ENCODE measurements at regions of chr1 and their contacts with region 1.

Region 1: GRCh38 chr1:37807555-37808368 is at the starts of genes C1orf122 and YRDC:
- DNase-seq: peak; percentile 92
- H3K4me3 Mint-ChIP-seq: peak within 1 kb of the TSS; percentile 89
- H3K27ac Mint-ChIP-seq: peak within 1 kb of the TSS; percentile 96
- H3K4me1 Mint-ChIP-seq: peaks cover 10% of the 10 kb centered on the region
- H3K27me3 Mint-ChIP-seq: no peaks in the 10 kb centered on the region
- CTCF ChIP-seq: no peak
- total RNA-seq, gene C1orf122: 72.4 and 81.5 TPM in 2 replicates
- total RNA-seq, gene YRDC: 40.4 and 41.5 TPM in 2 replicates

Region 2: DNA sequence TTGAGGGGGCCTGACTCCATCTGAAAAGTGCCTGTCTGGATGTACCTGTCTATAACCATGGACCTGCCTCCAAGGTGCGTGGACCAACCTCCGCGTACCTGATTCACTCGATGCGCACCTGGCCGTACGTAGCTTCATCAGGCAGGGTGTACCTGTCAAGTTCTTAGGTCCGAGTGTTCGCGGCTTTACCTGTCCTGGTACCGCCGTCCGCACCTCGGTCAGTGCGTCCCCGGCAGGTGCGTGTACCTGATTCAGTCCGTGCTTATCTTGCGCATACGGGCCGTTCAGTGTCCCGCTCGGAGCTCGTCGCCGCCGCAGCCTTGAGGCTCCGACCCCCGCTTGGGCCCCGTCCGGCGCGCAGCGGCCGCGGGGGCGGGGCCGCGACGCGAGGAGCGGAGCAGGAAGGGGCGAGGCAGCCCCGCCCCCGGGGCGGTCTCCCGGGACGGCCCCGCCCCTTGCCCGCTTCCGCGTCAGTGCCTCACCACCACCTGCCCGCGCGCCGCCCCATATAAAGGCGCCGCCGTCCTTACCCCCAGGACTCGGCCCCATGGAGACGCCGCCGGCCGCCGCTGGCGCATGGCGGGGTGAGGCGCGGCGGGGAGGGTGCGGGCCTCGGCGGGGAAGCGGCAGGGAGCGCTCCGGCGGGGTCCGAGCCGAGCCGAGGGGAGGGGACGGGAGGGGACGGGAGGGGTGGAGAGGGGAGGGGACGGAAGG is 333.6 kb before region 1 on chr1 and contains the start of gene ZC3H12A:
- CTCF ChIA-PET with region 1: no interaction called
- POLR2A ChIA-PET with region 1: interaction called, 13 read pairs
- intact Hi-C with region 1: loop called (anchors 10 kb)
- DNase-seq: peak; percentile 93
- H3K4me3 Mint-ChIP-seq: peak within 1 kb of the TSS; percentile 89
- H3K27ac Mint-ChIP-seq: peak within 1 kb of the TSS; percentile 94
- H3K4me1 Mint-ChIP-seq: peaks cover 49% of the 10 kb centered on the region
- H3K27me3 Mint-ChIP-seq: no peaks in the 10 kb centered on the region
- CTCF ChIP-seq: no peak
- total RNA-seq, gene ZC3H12A: 37.2 and 51.4 TPM in 2 replicates

Region 3: DNA sequence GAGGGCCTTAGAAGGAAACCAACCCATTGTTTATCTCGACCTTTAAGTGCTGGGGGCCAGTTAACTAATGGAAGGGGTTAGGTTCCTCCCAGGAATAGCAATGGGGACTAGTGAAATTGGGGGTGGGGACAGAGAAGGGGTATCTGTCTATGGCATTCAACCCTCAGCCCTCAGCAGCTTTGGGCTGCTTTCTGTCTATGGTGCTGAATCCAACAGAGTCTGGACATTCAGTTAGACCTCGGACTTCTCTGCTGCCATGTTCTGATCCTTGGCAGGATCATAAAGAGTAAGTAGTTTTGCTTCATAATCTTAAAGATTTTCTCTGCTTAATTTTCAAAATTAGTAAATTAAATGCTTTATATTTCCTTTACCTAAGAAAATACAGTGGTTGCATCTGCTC is 40.3 kb before region 1 on chr1:
- CTCF ChIA-PET with region 1: no interaction called
- POLR2A ChIA-PET with region 1: no interaction called
- intact Hi-C with region 1: no loop called
- DNase-seq: no peak
- H3K4me3 Mint-ChIP-seq: no peak overlapping the region
- H3K27ac Mint-ChIP-seq: no peak overlapping the region
- H3K4me1 Mint-ChIP-seq: no peaks in the 10 kb centered on the region
- H3K27me3 Mint-ChIP-seq: peaks cover 91% of the 10 kb centered on the region
- CTCF ChIP-seq: no peak

Region 4: GRCh38 chr1:37822906-37823815 is 15.4 kb after region 1 on chr1:
- CTCF ChIA-PET with region 1: interaction called, 3 read pairs
- POLR2A ChIA-PET with region 1: interaction called, 20 read pairs
- intact Hi-C with region 1: no loop called
- DNase-seq: no peak
- H3K4me3 Mint-ChIP-seq: no peak overlapping the region
- H3K27ac Mint-ChIP-seq: no peak overlapping the region
- H3K4me1 Mint-ChIP-seq: peaks cover 10% of the 10 kb centered on the region
- H3K27me3 Mint-ChIP-seq: no peaks in the 10 kb centered on the region
- CTCF ChIP-seq: no peak

Region 5: GRCh38 chr1:37851782-37852210 is 44.0 kb after region 1 on chr1:
- CTCF ChIA-PET with region 1: no interaction called
- POLR2A ChIA-PET with region 1: interaction called, 16 read pairs
- intact Hi-C with region 1: no loop called
- DNase-seq: peak; percentile 31
- H3K4me3 Mint-ChIP-seq: no peak overlapping the region
- H3K27ac Mint-ChIP-seq: no peak overlapping the region
- H3K4me1 Mint-ChIP-seq: peaks cover 6% of the 10 kb centered on the region
- H3K27me3 Mint-ChIP-seq: no peaks in the 10 kb centered on the region
- CTCF ChIP-seq: no peak

Region 6: GRCh38 chr1:37865348-37866120 is 57.8 kb after region 1 on chr1:
- CTCF ChIA-PET with region 1: interaction called, 29 read pairs
- POLR2A ChIA-PET with region 1: interaction called, 59 read pairs
- intact Hi-C with region 1: no loop called
- DNase-seq: peak; percentile 87
- H3K4me3 Mint-ChIP-seq: no peak overlapping the region
- H3K27ac Mint-ChIP-seq: peak overlapping the region; percentile 70
- H3K4me1 Mint-ChIP-seq: peaks cover 26% of the 10 kb centered on the region
- H3K27me3 Mint-ChIP-seq: no peaks in the 10 kb centered on the region
- CTCF ChIP-seq: no peak

Region 7: GRCh38 chr1:37978541-37978940 is 170.8 kb after region 1 on chr1:
- CTCF ChIA-PET with region 1: no interaction called
- POLR2A ChIA-PET with region 1: interaction called, 4 read pairs
- intact Hi-C with region 1: loop called (anchors 10 kb)
- DNase-seq: no peak
- H3K4me3 Mint-ChIP-seq: no peak overlapping the region
- H3K27ac Mint-ChIP-seq: no peak overlapping the region
- H3K4me1 Mint-ChIP-seq: no peaks in the 10 kb centered on the region
- H3K27me3 Mint-ChIP-seq: no peaks in the 10 kb centered on the region
- CTCF ChIP-seq: no peak

Region 8: GRCh38 chr1:38173157-38173831 is 365.5 kb after region 1 on chr1:
- CTCF ChIA-PET with region 1: no interaction called
- POLR2A ChIA-PET with region 1: no interaction called
- intact Hi-C with region 1: no loop called
- DNase-seq: no peak
- H3K4me3 Mint-ChIP-seq: no peak overlapping the region
- H3K27ac Mint-ChIP-seq: no peak overlapping the region
- H3K4me1 Mint-ChIP-seq: no peaks in the 10 kb centered on the region
- H3K27me3 Mint-ChIP-seq: no peaks in the 10 kb centered on the region
- CTCF ChIP-seq: no peak